Activated CD8-positive, alpha-beta memory T cell treated with anti-CD3 and anti-CD28 coated beads, Interleukin-2, amount 10 ng/mL, durations not matched to agents 7 days and 5 days (primary cell): ENCODE measurements at regions of chr3 and their contacts with region 1.

Region 1: DNA sequence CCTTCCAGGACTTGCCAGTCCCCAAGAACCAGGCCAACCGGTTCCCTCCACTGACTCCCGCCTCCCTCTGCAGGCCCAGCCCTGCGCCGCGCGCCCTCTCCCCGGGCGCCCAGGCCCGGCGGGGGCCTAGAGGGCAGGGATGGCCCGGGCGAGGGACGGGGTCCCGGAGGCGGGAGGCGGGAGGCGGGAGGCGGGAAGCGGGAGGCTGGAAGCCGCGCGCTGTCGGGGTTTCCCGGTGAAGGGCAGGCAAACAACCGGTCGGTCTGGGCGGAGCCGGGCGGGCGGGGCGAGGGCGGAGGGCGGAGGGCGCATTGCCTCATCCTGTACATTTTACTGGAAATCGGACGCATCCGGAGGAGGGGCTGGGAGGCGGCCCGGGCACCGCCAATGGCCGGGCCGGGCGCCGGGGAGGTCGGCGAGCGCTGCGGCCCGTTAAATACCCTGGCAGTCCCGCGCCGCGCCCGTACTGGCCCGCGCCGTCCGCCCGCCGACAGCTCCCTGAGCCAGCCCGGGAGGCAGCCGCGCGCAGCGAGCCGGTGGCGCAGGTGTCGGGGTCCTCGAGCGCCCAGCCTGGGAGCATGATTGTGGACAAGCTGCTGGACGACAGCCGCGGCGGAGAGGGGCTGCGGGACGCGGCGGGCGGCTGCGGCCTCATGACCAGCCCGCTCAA is at the start of gene NFKBIZ:
- DNase-seq: peak; percentile 95
- ATAC-seq: peak; percentile 85
- H3K4me3 Mint-ChIP-seq: peak within 1 kb of the TSS; percentile 96
- H3K27ac Mint-ChIP-seq: peak within 1 kb of the TSS; percentile 99
- H3K4me1 Mint-ChIP-seq: peaks cover 37% of the 10 kb centered on the region
- H3K27me3 Mint-ChIP-seq: no peaks in the 10 kb centered on the region
- total RNA-seq, gene NFKBIZ: 51.3 to 65.1 TPM

Region 2: DNA sequence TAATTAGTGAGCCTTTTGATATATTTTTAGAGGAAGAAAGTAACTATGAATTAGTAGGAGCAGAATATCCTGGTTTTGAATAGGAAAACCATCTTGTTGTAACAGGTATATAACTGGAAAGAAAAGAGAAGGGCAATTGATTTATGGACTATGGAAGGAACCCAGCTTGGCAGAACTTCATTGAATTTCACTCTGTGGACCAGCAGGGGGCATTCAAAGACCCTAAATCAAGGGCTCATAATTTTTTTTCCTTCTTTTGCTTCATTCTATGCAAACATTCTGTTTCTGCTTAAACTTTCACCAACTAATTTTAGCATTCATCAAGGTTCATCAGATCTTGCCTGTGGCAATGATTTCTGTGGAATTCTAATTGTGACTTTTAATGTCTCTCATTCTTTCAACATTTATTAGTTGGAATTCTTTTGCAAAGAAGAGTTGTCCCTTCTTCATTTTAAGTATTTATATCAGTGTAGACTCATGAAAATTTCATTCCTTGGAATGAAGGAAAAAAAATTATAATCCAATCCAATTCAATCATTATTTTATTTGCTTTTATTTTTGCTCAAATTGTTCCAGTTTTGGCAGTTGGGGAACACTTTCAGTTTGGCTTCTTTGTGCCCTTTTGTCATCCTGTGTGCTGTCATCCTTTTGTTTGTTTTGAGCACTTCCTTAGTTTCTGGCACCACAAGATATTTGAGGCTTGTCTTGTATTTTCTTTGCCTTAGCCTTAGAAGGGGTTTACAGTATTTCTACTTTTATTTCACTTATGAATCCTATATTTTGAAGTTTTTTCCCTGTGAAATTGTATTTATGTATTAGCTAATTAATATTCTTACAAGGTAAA is 39.8 kb before region 1 on chr3:
- CTCF ChIA-PET with region 1: interaction called, 11 read pairs
- DNase-seq: no peak
- ATAC-seq: peak; percentile 62
- H3K4me3 Mint-ChIP-seq: no peak overlapping the region
- H3K27ac Mint-ChIP-seq: peak overlapping the region; percentile 52
- H3K4me1 Mint-ChIP-seq: peaks cover 55% of the 10 kb centered on the region
- H3K27me3 Mint-ChIP-seq: no peaks in the 10 kb centered on the region

Region 3: DNA sequence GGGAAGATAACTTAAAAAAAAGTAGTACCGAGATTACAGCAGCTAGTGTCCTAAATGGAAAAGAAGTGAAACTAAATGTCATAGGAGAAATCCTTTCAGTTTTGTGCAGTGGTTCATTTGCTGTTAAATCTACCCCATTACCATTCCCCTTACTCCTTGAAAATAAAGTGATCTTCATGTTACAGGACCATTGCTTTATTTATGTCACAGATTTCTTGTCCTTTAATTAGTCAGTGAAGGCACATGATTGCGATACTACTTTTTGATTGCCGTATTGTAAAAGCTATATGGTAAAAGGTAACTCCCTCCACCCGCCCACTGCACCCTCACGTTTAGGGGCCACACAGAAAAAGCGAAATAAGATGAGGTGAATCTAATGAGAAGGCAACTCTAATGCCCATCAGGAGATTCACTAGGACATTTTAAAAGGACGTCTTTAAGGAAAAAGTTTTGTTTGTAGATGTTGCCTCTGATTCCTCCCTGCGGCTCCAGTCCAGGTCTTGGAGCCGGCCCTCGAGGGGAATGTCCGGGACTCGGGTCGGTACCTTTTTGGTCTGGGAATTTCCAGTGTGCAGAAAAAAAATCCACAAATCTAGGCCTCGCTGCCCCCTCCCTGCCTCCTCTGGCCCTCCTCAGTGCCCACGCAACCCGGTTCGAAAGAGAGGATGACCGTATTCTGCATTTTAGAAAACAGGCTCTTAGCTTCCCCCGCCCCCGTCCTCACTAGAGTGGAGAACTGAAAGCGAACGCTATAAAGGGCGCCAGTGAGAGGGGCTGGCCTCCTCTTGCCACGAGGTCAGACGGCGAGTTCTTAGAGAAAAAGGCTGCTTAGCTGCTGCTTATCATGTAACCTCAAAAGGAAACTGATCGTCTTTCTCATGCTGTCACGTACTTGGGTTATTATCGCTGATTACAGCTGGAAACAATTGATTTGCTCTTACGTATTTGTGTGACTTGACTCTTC is 21.7 kb before region 1 on chr3:
- CTCF ChIA-PET with region 1: interaction called, 11 read pairs
- DNase-seq: peak; percentile 91
- ATAC-seq: peak; percentile 89
- H3K4me3 Mint-ChIP-seq: peak overlapping the region; percentile 96
- H3K27ac Mint-ChIP-seq: peak overlapping the region; percentile 98
- H3K4me1 Mint-ChIP-seq: peaks cover 56% of the 10 kb centered on the region
- H3K27me3 Mint-ChIP-seq: no peaks in the 10 kb centered on the region

Region 4: GRCh38 chr3:101868534-101869464 is 19.6 kb after region 1 on chr3:
- CTCF ChIA-PET with region 1: no interaction called
- DNase-seq: no peak
- ATAC-seq: no peak
- H3K4me3 Mint-ChIP-seq: no peak overlapping the region
- H3K27ac Mint-ChIP-seq: no peak overlapping the region
- H3K4me1 Mint-ChIP-seq: no peaks in the 10 kb centered on the region
- H3K27me3 Mint-ChIP-seq: no peaks in the 10 kb centered on the region